ENCODE measurements at regions of chr5 and their contacts with region 1.

Region 1: DNA sequence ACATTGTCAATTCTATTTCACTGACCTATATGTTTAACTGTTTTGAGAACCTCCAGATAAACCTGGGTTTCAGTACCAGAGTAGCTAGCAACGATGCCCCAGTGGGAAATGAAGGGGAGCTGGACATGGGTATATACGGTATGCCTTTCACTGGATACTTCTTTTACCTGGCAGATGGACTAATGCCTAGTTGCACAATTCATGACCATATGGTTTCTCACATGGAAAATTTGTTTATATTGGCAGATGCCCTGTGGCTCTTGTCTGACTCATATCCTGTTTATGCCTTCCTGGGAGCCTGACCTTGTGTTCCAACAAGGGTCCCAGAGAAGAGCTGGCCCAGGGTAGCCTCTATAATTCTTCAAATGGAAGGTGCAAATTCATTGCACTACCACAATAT is 144.1 kb downstream of the MAT2B start:
- DNase-seq: peak; percentile 82
- H3K4me3 ChIP-seq: no peak overlapping the region
- H3K27ac ChIP-seq: no peak overlapping the region
- H3K4me1 ChIP-seq: peaks cover 18% of the 10 kb centered on the region
- H3K27me3 ChIP-seq: no peaks in the 10 kb centered on the region
- CTCF ChIP-seq: no peak

Region 2: DNA sequence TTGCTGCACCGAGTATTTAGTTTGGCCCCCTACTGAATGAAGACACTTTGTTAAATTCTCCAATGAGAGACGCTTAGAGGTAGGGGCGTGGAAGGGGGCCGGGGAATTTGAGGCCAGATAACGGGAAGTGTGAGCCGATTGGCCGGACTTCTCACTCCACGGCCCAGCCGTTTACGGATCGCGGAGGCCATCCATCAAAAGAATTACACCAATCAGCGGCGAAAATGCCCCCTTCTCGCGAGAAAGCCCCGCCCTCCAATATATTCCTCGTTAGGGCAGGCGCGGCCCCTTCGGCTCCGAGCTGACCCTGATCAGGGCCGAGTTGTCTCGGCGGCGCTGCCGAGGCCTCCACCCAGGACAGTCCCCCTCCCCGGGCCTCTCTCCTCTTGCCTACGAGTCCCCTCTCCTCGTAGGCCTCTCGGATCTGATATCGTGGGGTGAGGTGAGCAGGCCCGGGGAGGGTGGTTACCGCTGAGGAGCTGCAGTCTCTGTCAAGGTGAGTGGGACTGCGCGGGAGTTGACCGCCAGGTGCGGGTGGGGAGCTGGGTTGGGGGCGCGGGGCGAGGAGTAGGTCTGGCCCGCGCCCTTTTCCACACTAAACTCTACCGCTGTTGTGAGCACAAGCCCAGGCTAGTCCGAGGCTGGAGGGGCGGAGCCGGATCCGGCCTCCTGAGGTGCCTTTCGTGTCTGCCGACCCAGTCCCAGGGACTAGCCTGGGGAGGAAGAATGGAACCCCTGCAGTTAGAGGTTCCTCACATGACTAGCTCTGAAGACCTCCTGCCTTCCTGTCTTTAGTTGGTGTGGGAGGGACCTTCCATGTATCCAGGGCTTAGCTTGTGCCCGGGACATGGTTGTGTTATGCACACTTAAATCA is 212.0 kb before region 1 on chr5 and contains the start of gene CCNG1:
- CTCF ChIA-PET with region 1: no interaction called
- dilution Hi-C with region 1: no loop called
- in situ Hi-C with region 1: no loop called
- intact Hi-C with region 1: loop called (anchors 2 kb)
- DNase-seq: peak; percentile 95
- H3K4me3 ChIP-seq: peak within 1 kb of the TSS; percentile 77 to 97 (median 93)
- H3K27ac ChIP-seq: peak within 1 kb of the TSS; percentile 86
- H3K4me1 ChIP-seq: peaks cover 15% of the 10 kb centered on the region
- H3K27me3 ChIP-seq: no peaks in the 10 kb centered on the region
- CTCF ChIP-seq: no peak
- total RNA-seq, gene CCNG1: 97.6 to 215 TPM

Region 3: GRCh38 chr5:163585206-163585605 is 64.3 kb before region 1 on chr5:
- CTCF ChIA-PET with region 1: no interaction called
- dilution Hi-C with region 1: no loop called
- in situ Hi-C with region 1: no loop called
- intact Hi-C with region 1: loop called (anchors 5 kb)
- DNase-seq: peak; percentile 79
- H3K4me3 ChIP-seq: no peak overlapping the region
- H3K27ac ChIP-seq: no peak overlapping the region
- H3K4me1 ChIP-seq: peaks cover 13% of the 10 kb centered on the region
- H3K27me3 ChIP-seq: no peaks in the 10 kb centered on the region
- CTCF ChIP-seq: no peak

Measured in mammary epithelial cell (primary cell).